Psoas muscle (tissue), 8 donors: ENCODE measurements at regions of chr10 and their contacts with region 1.

Region 1: DNA sequence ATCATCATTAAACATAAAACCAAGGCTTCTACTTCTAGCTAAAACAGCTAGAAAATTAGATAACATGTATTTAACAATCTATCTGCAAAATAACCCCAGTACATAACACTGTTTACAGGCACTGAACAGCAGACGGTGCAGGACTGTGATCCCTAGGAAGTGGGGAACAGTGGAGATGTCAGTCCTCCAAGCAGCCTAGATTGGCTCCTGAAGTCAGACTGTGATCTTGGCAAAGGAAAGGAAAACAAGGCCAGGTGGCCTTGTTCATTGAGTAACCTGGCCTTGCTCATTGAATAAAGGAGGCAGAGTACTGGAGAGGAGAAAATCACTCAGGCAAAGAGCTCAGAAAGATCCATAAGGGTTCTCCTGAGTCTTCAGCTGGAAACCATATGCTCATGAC is 77.7 kb upstream of the DIP2C start:
- DNase-seq: no peak
- ATAC-seq: no peak
- H3K4me3 ChIP-seq: no peak overlapping the region
- H3K27ac ChIP-seq: no peak overlapping the region
- H3K4me1 ChIP-seq: no peaks in the 10 kb centered on the region
- H3K27me3 ChIP-seq: no peaks in the 10 kb centered on the region
- CTCF ChIP-seq: no peak

Region 2: GRCh38 chr10:718152-718700 is 49.0 kb before region 1 on chr10:
- intact Hi-C with region 1: loop called in 1 of 2 experiments (anchors 10 kb)
- DNase-seq: no peak
- ATAC-seq: no peak
- H3K4me3 ChIP-seq: no peak overlapping the region
- H3K27ac ChIP-seq: no peak overlapping the region
- H3K4me1 ChIP-seq: no peaks in the 10 kb centered on the region
- H3K27me3 ChIP-seq: no peaks in the 10 kb centered on the region
- CTCF ChIP-seq: no peak